CD8-positive, alpha-beta T cell (primary cell): ENCODE measurements at regions of chr5 and their contacts with region 1.

Region 1: GRCh38 chr5:165334201-165334600 is 1828.8 kb downstream of the MAT2B start:
- DNase-seq: no peak
- ATAC-seq: no peak
- H3K4me3 ChIP-seq: no peak overlapping the region
- H3K4me3 Mint-ChIP-seq: no peak overlapping the region
- H3K27ac ChIP-seq: no peak overlapping the region
- H3K27ac Mint-ChIP-seq: no peak overlapping the region
- H3K4me1 ChIP-seq: no peaks in the 10 kb centered on the region
- H3K4me1 Mint-ChIP-seq: no peaks in the 10 kb centered on the region
- H3K27me3 ChIP-seq: no peaks in the 10 kb centered on the region
- H3K27me3 Mint-ChIP-seq: no peaks in the 10 kb centered on the region
- CTCF ChIP-seq: no peak

Region 2: GRCh38 chr5:164302533-164303235 is 1031.5 kb before region 1 on chr5:
- CTCF ChIA-PET with region 1: no interaction called
- POLR2A ChIA-PET with region 1: no interaction called
- intact Hi-C with region 1: loop called in 1 of 2 experiments (anchors 5 kb)
- DNase-seq: no peak
- ATAC-seq: no peak
- H3K4me3 ChIP-seq: no peak overlapping the region
- H3K4me3 Mint-ChIP-seq: no peak overlapping the region
- H3K27ac ChIP-seq: no peak overlapping the region
- H3K27ac Mint-ChIP-seq: no peak overlapping the region
- H3K4me1 ChIP-seq: no peaks in the 10 kb centered on the region
- H3K4me1 Mint-ChIP-seq: no peaks in the 10 kb centered on the region
- H3K27me3 ChIP-seq: no peaks in the 10 kb centered on the region
- H3K27me3 Mint-ChIP-seq: no peaks in the 10 kb centered on the region
- CTCF ChIP-seq: no peak